Kidney (tissue), 22 donors: ENCODE measurements at regions of chr6 and their contacts with region 1.

Region 1: DNA sequence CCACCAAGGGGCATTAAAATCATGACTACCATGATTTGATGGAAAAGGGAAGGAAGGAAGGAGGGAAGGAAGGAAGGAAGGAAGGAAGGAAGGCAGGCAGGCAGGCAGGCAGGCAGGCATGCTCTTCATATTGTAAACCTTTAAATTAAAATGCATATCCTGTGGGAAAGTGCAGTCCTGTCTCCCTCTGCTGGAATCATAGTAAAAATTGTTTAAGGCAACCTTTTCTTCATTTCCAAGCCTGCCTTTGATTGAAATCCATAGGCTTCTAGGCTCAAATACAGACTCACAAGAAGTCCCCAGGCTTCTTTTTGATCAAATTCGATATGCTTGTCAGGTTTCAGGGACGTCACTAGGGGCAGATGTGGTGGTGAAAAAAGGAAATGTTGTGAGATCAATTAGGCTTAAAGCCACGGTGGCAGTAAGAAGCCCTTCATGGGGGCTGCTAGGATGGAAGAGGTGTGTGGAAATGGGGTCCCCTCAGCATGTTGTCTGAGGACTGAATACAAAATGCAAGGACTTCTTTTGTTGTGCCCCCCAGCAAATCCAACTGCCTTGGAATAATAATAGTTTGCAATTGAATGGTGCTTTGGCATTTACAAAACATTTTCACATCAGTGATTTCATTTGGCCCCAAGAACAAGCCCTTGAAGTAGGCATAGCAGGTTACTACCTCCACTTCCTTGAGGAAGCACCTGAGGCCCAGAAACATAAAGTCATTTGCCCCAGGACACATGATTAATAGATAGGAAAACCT is 25.6 kb upstream of the GABRR1 start:
- DNase-seq: peak in 3 of 5 donors; percentile 38 to 85 (median 67)
- H3K4me3 ChIP-seq: no peak overlapping the region
- H3K27ac ChIP-seq: no peak overlapping the region
- H3K4me1 ChIP-seq: peaks cover 0 to 7% (median 0%) of the 10 kb centered on the region in 3 donors
- H3K27me3 ChIP-seq: no peaks in the 10 kb centered on the region
- CTCF ChIP-seq: peak; percentile 39

Region 2: GRCh38 chr6:88982720-88983119 is 260.0 kb before region 1 on chr6:
- intact Hi-C with region 1: loop called (anchors 10 kb)
- DNase-seq: peak in 2 of 5 donors; percentile 73 to 75
- H3K4me3 ChIP-seq: peak overlapping the region in 1 of 3 donors; percentile 14
- H3K27ac ChIP-seq: no peak overlapping the region
- H3K4me1 ChIP-seq: peaks cover 0 to 5% (median 4%) of the 10 kb centered on the region in 3 donors
- H3K27me3 ChIP-seq: no peaks in the 10 kb centered on the region
- CTCF ChIP-seq: peak; percentile 80

Region 3: DNA sequence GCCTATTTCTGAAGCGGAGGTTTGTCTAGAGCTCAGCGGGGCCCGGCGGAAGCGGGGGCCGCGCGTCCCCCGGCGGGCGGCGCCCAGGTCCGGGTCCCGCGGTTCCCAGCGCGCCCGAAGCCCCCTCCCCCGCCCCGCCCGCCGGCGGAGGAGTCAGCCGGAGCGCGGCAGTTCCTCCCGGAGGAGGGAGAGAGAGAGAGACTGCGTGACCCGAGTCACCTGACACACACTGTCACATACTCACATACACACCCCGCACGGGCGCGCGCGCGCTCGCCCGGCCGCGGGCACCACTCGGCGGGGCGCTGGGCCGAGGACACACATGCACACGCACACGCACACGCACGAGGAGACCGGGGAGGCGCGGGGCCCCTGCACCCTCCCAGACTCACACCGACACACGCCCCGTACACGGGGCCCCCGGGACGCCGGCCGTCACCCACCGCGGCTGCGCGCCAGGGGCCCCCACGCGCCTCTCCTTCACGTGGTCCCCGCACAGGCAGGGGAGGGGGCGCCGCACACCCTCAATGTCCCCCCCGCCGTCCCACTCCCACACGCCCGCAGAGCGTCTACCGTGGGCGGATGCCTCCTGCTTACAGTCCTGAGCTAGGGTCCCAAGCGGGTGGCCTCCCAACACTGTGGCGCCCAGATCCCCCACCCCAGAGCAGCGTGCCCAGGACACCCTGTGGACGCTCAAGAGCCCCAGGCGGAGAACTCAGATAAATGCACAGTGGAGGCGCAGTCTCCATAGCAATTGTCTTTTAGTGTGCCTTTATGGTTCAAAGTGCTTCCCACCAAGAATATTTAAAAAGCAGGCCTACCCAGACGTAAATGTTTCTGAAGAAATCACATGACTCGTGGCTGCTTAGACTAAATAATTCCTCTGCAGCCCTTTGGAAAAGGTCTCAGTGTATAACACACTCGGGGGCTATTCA is 169.6 kb after region 1 on chr6 and contains the start of gene RRAGD:
- intact Hi-C with region 1: no loop called
- DNase-seq: peak; percentile 81 to 92 (median 88)
- H3K4me3 ChIP-seq: peak within 1 kb of the TSS; percentile 61 to 73 (median 70)
- H3K27ac ChIP-seq: peak within 1 kb of the TSS; percentile 92
- H3K4me1 ChIP-seq: peaks cover 0 to 9% (median 6%) of the 10 kb centered on the region in 3 donors
- H3K27me3 ChIP-seq: no peaks in the 10 kb centered on the region
- CTCF ChIP-seq: no peak
- total RNA-seq, gene RRAGD: 31.5 TPM